Colonic mucosa (tissue), 4 donors: ENCODE measurements at regions of chr10 and their contacts with region 1.

Region 1: GRCh38 chr10:132788180-132788830 is 2.4 kb upstream of the NKX6-2 start:
- DNase-seq: no peak
- H3K4me3 ChIP-seq: no peak overlapping the region
- H3K27ac ChIP-seq: no peak overlapping the region
- H3K4me1 ChIP-seq: peaks cover 12% of the 10 kb centered on the region
- H3K27me3 ChIP-seq: peaks cover 63% of the 10 kb centered on the region
- CTCF ChIP-seq: peak; percentile 17

Region 2: DNA sequence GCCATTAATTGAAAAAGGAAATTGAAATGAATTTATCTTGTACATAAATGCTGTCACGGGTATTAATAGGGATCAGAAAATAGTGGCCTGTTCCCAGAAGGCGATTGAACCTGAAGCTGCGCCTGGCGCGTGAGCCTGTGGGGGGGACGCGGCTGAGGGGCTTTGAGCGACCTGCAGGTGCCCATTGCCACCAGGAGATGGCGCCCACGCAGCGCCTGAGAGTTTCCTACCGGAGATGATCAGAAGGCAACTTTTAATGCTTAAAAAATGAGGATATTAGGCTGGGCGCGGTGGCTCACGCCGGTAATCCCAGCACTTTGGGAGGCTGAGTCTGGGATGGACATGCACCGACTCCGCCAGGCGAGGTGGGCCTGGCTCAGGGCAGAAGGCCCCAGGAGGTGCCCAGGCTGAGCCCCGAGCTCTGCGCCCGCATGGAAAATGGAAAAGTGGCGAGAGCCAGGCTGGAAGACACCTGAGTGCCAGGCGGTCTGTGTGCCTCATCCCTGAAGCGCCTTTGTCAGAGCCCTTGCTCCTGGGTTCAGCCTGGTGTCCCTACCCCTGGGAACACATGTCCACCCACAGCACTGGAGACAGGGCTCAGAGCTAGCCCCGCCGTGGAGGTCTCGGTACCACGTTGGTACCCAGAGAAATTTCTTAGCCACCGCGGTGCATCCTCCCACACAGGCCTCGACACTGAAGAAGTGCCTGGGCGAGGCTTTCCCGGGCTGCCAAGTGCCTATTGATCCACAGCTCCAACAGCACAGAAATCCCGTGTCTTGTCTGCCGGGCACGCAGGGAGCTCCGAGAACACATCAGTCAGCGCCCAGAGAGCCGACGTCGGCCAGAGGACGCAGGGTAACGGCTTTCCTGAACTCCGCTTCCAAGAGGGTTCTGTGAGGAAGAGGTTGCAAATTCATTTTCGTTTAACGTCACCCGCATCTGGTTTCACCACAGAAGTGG is 133.3 kb before region 1 on chr10:
- intact Hi-C with region 1: loop called (anchors 1 kb)
- DNase-seq: peak; percentile 36
- H3K4me3 ChIP-seq: no peak overlapping the region
- H3K27ac ChIP-seq: no peak overlapping the region
- H3K4me1 ChIP-seq: no peaks in the 10 kb centered on the region
- H3K27me3 ChIP-seq: no peaks in the 10 kb centered on the region
- CTCF ChIP-seq: peak; percentile 94